ENCODE measurements at regions of chr20 and their contacts with region 1.

Region 1: GRCh38 chr20:2651772-2652723 is at the start of gene NOP56:
- DNase-seq: peak; percentile 95
- ATAC-seq: peak; percentile 84
- H3K4me3 Mint-ChIP-seq: peak within 1 kb of the TSS; percentile 87
- H3K27ac Mint-ChIP-seq: peak within 1 kb of the TSS; percentile 90
- H3K4me1 Mint-ChIP-seq: peaks cover 40% of the 10 kb centered on the region
- H3K27me3 Mint-ChIP-seq: no peaks in the 10 kb centered on the region
- total RNA-seq, gene NOP56: 504 to 532 TPM

Region 2: DNA sequence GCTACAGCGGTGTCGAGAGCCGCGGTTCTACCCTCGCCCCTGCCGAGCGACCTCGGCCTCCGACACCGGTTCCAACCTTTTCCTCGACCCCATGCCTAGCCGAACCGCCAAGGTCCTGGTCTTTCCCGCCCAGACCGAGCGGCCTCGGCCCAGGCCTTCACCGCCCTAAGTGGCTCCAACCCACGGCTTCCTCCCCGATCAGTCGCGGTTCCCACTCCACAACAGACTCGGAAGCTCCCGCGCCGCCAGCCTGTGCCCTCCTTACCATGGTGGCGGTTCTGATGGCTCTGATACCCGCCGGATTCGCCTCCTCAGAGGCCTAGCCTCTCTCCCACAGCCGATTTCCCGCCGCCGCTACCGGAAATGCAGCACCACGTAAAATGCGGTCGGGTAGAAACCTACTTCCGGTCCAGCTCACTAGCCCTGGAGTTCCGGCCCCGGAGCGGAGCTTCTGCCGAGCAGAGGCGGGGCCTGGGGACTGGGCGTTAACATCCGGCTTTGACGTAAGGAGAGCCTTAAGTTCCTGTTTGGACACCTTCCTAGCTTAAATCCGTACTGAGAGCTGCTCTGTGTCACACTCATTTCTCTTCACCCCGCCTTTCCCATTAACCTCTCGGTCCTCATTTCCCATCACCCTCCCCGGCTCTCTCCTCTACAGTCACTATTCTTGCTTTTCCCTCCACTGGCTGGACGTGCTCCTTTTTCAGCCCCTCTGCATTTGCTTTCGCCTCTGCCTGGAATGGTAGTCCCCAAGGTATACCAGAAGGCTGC is 181.4 kb before region 1 on chr20 and contains the start of gene SNRPB:
- CTCF ChIA-PET with region 1: interaction called, 4 read pairs
- POLR2A ChIA-PET with region 1: interaction called, 14 read pairs
- intact Hi-C with region 1: loop called (anchors 1 to 2 kb)
- DNase-seq: peak; percentile 98
- ATAC-seq: peak; percentile 99
- H3K4me3 Mint-ChIP-seq: peak within 1 kb of the TSS; percentile 96
- H3K27ac Mint-ChIP-seq: peak within 1 kb of the TSS; percentile 100
- H3K4me1 Mint-ChIP-seq: peaks cover 49% of the 10 kb centered on the region
- H3K27me3 Mint-ChIP-seq: no peaks in the 10 kb centered on the region
- total RNA-seq, gene SNRPB: 348 to 466 TPM

Region 3: DNA sequence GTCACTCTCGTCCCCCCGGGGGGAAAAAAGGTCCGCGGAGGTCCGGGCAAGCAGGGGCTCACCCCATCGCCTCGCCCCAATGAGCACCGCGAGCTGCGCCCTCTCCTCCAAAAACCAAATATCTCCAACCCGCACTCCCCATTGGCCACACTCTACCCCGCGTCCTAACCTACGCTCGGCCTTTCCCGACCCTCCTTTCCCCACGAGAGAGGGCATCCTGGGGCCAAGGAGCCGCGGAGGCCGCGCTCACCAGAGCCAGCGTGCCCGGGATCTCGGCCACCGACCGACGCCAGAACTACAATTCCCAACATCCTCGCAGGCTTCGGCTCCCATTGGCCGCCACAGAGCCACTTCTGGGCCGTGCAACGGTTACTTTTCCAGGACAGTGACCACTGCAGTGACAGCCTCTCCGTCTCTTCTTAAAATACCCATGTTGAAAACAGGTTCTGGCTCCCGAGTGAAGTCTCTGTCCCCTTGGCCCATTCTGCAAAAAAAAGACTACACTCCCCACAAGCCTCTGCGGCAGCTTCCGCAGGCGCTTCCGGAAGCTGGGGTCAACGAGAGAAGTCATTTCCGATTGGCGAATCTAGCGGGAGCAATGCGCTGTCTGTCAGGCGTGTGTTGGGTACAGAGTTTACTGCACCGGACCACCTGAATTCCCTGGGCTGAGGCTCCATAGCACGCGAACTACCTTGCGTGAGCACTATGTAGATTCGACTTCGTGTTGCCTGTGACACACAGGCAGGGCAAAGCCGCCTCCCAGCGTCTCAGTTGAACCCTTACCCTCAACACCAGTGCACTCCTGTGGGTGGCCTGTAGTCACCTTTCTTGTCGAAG is 143.2 kb before region 1 on chr20 and contains the start of gene ZNF343:
- CTCF ChIA-PET with region 1: interaction called, 4 read pairs
- POLR2A ChIA-PET with region 1: interaction called, 3 read pairs
- intact Hi-C with region 1: loop called in 1 of 2 experiments (anchors 1 kb)
- DNase-seq: peak; percentile 88
- ATAC-seq: peak; percentile 95
- H3K4me3 Mint-ChIP-seq: peak within 1 kb of the TSS; percentile 85
- H3K27ac Mint-ChIP-seq: peak within 1 kb of the TSS; percentile 95
- H3K4me1 Mint-ChIP-seq: peaks cover 8% of the 10 kb centered on the region
- H3K27me3 Mint-ChIP-seq: peaks cover 5% of the 10 kb centered on the region
- total RNA-seq, gene ZNF343: 9.9 to 12.3 TPM

Region 4: DNA sequence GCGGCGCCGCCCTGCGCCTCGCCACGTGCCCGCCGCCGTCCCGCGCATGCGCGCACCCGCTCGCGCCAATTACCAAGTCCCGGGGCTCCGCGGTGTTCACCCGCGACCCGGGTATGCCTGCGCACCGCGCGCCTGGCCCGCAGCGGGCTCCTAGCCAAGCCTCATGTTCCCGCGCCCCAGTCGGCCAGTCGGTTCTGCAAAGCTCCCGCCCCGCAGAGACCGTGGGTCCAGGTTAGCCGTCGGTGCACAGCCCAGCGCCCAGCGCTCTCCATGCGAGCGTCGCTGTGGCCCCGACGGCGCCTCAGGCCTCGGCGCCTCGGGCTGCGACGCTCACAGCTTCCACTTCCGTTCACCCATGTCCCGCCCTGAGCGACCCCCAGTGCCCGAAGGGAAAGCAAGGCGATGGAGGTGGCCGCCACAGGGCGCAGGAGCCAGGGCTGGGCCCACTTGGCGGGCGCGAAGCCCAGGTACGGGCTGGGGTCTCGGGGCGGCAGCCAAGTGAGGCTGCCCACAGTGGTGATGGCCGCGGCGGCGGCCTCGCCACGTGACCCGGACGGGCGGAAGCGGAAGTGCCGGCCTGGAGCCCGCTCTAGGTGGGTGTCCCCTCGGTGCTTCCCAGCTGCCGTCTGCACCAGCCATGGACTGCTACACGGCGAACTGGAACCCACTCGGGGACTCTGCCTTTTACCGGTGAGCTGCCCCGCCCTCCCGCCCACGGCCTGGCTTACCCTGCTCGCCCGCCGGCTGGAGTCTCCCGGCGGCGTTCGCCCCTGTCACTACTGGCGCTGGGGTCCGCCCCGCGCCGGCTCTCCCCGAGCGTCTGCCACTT is 188.3 kb after region 1 on chr20 and contains the starts of genes PCED1A and VPS16:
- CTCF ChIA-PET with region 1: no interaction called
- POLR2A ChIA-PET with region 1: no interaction called
- intact Hi-C with region 1: loop called in 1 of 2 experiments (anchors 1 kb)
- DNase-seq: peak; percentile 94
- ATAC-seq: peak; percentile 99
- H3K4me3 Mint-ChIP-seq: peak within 1 kb of the TSS; percentile 76
- H3K27ac Mint-ChIP-seq: peak within 1 kb of the TSS; percentile 84
- H3K4me1 Mint-ChIP-seq: peaks cover 32% of the 10 kb centered on the region
- H3K27me3 Mint-ChIP-seq: no peaks in the 10 kb centered on the region
- total RNA-seq, gene PCED1A: 29.4 to 35.3 TPM
- total RNA-seq, gene VPS16: 32.3 to 47.6 TPM

Region 5: DNA sequence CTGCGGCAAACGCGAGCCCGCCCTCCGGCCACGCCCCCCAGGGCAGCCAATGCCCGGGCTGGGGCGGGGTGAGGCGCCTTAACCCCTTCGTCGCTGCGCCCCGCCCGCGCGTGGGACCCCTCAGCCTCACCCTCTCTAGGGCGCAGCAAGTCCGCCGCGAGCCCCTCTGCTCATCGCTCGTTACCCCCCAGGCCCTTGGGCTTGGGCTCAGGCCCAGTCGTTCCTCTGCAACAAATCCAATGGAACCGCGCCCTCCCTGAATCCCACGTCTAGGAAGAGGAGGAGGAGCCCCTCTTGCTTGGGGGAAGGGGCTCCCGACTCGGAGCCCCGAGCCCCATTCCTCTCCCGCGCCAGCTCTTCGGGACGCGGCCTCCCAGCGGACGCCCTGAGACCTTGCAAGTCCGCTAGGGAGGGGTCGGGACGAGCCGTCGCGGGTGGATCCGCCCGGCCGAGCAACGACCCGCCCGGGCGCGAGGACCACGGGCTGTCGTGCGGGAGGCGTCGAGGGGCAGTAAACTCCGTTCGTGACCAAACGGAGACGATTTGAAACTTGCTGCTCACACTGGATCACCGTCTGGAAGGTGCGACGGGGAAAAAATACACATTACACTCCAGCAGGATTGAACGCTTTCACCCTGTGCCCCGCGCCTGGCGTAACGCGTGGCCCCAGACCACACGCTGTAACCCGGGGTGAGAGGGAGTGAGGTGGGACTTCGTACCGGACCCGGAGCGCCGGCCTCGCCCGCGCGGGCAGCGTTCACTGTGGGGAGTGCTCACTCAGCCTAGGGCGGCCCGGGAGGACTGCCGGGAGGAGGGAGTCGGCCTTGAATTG is 521.8 kb after region 1 on chr20:
- CTCF ChIA-PET with region 1: no interaction called
- POLR2A ChIA-PET with region 1: no interaction called
- intact Hi-C with region 1: loop called in 1 of 2 experiments (anchors 1 kb)
- DNase-seq: peak; percentile 94
- ATAC-seq: peak; percentile 40
- H3K4me3 Mint-ChIP-seq: peak overlapping the region; percentile 77
- H3K27ac Mint-ChIP-seq: peak overlapping the region; percentile 55
- H3K4me1 Mint-ChIP-seq: peaks cover 10% of the 10 kb centered on the region
- H3K27me3 Mint-ChIP-seq: peaks cover 19% of the 10 kb centered on the region